ENCODE measurements at regions of chr3 and their contacts with region 1.

Region 1: DNA sequence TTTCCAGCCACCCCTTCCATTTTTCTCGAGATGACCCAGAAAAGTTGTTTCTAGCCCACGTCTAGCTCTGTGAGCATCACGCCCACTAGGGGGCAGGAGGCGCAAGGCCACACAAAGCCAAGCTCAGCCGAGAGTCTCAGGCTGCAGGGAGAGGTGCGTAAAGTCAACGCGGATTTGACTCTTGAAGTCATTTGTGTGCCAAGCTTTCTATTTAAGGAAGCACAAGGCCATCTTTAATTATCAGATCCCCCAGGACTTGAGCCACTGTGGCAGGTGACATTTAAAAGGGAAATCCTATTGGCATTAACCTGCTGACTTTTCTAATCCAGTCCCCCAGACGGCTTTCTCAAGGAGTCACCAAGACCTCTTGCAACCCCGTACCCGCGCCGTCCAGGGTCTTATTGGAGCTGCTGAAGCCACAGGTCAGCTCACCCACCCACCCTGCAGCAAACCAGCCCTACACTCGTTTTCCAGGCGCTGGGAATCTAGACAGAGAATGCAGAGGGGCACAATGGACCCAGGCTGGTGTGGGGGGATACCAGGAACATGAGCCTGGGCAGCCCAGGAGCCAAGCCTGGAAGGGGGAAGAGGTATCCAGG is 62.1 kb downstream of the CAPN7 start:
- DNase-seq: peak; percentile 83
- ATAC-seq: peak; percentile 84
- H3K4me3 ChIP-seq: no peak overlapping the region
- H3K27ac ChIP-seq: no peak overlapping the region
- H3K4me1 ChIP-seq: peaks cover 13% of the 10 kb centered on the region
- H3K27me3 ChIP-seq: no peaks in the 10 kb centered on the region
- CTCF ChIP-seq: peak; percentile 99
- POLR2A ChIP-seq: peak; percentile 70
- RAD21 ChIP-seq: peak; percentile 99

Region 2: DNA sequence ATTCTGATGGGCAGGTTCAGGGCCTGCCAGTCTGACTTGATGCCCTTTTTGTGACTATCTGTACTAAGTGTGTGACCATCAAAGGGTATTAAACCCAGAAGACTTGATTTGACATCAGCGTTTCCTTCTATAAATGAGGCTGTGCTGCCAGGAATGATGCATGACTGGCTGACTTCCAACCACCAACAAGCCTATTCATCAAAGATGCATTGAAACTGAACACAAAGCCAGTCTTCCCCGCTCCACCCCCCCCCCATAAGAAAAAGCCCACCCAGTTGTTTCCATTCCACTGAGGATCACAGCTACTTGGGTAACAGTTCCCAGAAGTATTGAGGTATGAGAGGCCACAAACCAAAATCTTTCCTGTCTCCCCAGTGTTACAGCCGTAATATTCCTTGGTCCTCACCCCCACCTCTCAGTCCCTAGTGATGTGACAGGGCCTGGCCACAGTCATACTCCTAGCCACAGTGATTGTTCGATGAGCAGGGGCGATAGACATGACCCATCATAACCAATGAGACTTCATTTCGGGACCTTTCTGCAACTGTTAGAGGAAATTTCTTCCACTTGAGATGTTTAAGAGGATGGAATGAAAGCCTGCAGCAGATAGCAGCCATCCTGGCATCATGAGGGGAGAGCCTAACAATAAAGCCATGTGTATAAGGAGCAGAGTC is 41.7 kb after region 1 on chr3:
- CTCF ChIA-PET with region 1: no interaction called
- POLR2A ChIA-PET with region 1: no interaction called
- dilution Hi-C with region 1: no loop called
- in situ Hi-C with region 1: no loop called
- intact Hi-C with region 1: no loop called
- DNase-seq: no peak
- ATAC-seq: peak; percentile 33
- H3K4me3 ChIP-seq: no peak overlapping the region
- H3K27ac ChIP-seq: peak overlapping the region; percentile 12; the same call in 1 of the 2 replicates
- H3K4me1 ChIP-seq: peaks cover 10% of the 10 kb centered on the region
- H3K27me3 ChIP-seq: no peaks in the 10 kb centered on the region
- CTCF ChIP-seq: no peak
- POLR2A ChIP-seq: no peak
- RAD21 ChIP-seq: no peak

Region 3: DNA sequence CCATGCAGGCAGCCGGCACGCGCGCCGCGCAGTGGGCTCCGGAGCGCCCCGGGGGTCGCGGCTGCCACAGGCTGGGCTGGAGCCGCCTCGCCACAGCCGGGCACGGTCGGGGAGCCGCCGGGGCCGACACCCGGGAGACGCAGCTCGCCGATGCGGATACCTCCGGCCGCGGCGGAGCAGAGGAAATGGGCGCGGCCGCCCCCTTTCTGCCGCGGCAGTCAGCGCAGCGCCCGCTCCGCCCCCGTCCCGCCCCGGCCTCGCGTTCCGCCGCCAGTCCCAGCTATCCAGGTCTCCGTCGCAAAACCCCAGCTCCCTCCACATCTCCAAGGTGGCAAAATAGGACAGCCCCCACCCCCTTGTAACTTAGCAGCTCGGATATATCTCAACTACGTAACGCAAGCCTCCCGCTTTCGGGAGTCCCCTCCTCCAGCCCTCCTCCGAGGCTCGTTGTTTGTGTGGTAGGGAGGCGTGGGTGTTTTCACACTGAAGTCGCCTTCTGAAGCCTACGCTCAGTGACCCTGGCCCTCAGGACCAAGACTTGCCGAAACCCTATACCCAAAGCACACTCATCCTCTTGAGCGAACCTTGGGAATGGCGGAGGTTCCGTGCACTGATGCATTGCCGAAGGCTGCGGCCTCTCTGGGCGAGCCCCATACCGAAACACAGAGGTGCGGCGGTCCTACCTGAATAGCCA is 64.4 kb after region 1 on chr3 and contains the start of gene SH3BP5:
- CTCF ChIA-PET with region 1: interaction called, 12 read pairs
- POLR2A ChIA-PET with region 1: no interaction called
- dilution Hi-C with region 1: no loop called
- in situ Hi-C with region 1: loop called (anchors 5 kb)
- intact Hi-C with region 1: loop called (anchors 1 kb)
- DNase-seq: peak; percentile 47
- ATAC-seq: peak; percentile 95
- H3K4me3 ChIP-seq: peak within 1 kb of the TSS; percentile 86
- H3K27ac ChIP-seq: peak within 1 kb of the TSS; percentile 38; the same call in 1 of the 2 replicates
- H3K4me1 ChIP-seq: peaks cover 10% of the 10 kb centered on the region
- H3K27me3 ChIP-seq: no peaks in the 10 kb centered on the region
- CTCF ChIP-seq: peak; percentile 69
- POLR2A ChIP-seq: no peak
- RAD21 ChIP-seq: peak; percentile 62
- total RNA-seq, gene SH3BP5: 14.0 and 14.2 TPM in 2 replicates

Region 4: DNA sequence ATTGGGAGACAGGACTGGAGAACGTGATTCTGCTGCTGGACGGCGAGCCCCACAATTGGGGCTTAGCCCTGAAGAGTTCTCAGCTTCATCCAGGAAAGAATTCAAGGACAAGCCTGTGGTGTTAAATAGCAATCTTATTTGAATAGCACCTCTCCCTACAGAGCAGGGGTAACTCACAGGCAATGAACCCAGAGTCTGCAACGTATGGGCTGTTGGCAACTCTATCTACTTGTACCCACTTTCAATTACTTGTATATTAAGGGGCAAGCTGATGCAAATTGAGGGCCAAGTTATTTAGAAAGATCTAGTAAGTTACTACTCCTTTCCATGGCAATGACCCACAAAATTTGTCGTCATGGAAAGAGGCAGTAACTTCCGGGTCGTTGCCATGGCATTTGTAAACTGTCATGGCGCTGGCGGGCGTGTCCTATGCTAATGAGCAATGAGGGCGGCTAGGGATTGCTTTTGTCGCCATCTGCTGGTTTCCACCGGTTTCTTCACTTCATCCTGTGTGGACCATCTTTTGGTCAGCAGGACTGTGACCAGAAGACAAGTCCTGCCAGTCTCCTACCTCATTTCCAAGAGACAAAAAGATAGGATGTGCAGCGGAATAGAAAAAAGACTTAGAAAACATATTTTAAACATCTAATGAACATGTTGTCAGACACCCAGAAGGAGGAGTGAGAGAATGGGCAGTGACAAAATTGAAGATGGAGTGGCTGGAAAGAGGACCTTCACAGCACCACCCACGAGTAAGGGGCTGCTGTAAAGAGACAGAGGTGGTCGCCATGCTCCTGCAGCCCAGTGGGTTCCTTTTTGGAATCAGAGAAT is 110.0 kb after region 1 on chr3:
- CTCF ChIA-PET with region 1: interaction called, 11 read pairs
- POLR2A ChIA-PET with region 1: no interaction called
- dilution Hi-C with region 1: no loop called
- in situ Hi-C with region 1: loop called (anchors 5 kb)
- intact Hi-C with region 1: loop called (anchors 1 kb)
- DNase-seq: peak; percentile 93
- ATAC-seq: peak; percentile 100
- H3K4me3 ChIP-seq: no peak overlapping the region
- H3K27ac ChIP-seq: no peak overlapping the region
- H3K4me1 ChIP-seq: no peaks in the 10 kb centered on the region
- H3K27me3 ChIP-seq: no peaks in the 10 kb centered on the region
- CTCF ChIP-seq: peak; percentile 95
- POLR2A ChIP-seq: 0 out of 2 replicates have a peak, but pooled peaks have one; percentile 30
- RAD21 ChIP-seq: peak; percentile 93

Region 5: GRCh38 chr3:15384510-15385237 is 116.5 kb after region 1 on chr3:
- CTCF ChIA-PET with region 1: interaction called, 4 read pairs
- POLR2A ChIA-PET with region 1: no interaction called
- dilution Hi-C with region 1: no loop called
- in situ Hi-C with region 1: loop called (anchors 5 kb)
- intact Hi-C with region 1: no loop called
- DNase-seq: no peak
- ATAC-seq: no peak
- H3K4me3 ChIP-seq: no peak overlapping the region
- H3K27ac ChIP-seq: no peak overlapping the region
- H3K4me1 ChIP-seq: no peaks in the 10 kb centered on the region
- H3K27me3 ChIP-seq: no peaks in the 10 kb centered on the region
- CTCF ChIP-seq: no peak
- POLR2A ChIP-seq: no peak
- RAD21 ChIP-seq: no peak

Region 6: GRCh38 chr3:15405448-15406050 is 137.4 kb after region 1 on chr3:
- CTCF ChIA-PET with region 1: interaction called, 25 read pairs
- POLR2A ChIA-PET with region 1: no interaction called
- dilution Hi-C with region 1: no loop called
- in situ Hi-C with region 1: no loop called
- intact Hi-C with region 1: loop called (anchors 1 kb)
- DNase-seq: peak; percentile 71
- ATAC-seq: peak; percentile 77
- H3K4me3 ChIP-seq: no peak overlapping the region
- H3K27ac ChIP-seq: no peak overlapping the region
- H3K4me1 ChIP-seq: no peaks in the 10 kb centered on the region
- H3K27me3 ChIP-seq: no peaks in the 10 kb centered on the region
- CTCF ChIP-seq: peak; percentile 65
- POLR2A ChIP-seq: no peak
- RAD21 ChIP-seq: peak; percentile 68

Region 7: DNA sequence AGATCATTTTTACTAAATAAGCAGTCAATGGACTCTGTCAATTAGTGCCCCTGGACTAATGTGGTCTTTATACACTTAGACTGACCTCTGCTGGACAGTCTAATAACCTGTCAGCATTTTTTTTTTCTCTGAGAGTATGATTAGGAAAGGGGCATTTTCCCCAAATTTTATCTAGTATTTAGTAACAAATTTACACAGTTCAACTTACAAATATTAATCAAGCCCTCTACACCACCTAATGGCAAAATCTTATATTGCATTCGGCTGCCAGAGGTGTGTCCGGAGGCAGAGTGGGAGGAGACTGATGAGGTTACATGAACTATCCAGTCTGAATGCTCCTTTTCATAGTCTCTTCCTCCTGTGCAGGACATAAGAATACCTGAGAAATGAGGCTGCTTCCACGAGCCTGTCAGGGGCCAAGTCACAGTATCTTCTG is 289.4 kb after region 1 on chr3:
- CTCF ChIA-PET with region 1: no interaction called
- POLR2A ChIA-PET with region 1: no interaction called
- dilution Hi-C with region 1: no loop called
- in situ Hi-C with region 1: no loop called
- intact Hi-C with region 1: loop called (anchors 1 kb)
- DNase-seq: peak; percentile 75
- ATAC-seq: peak; percentile 99
- H3K4me3 ChIP-seq: no peak overlapping the region
- H3K27ac ChIP-seq: no peak overlapping the region
- H3K4me1 ChIP-seq: no peaks in the 10 kb centered on the region
- H3K27me3 ChIP-seq: no peaks in the 10 kb centered on the region
- CTCF ChIP-seq: peak; percentile 58
- POLR2A ChIP-seq: no peak
- RAD21 ChIP-seq: peak; percentile 52

Region 8: DNA sequence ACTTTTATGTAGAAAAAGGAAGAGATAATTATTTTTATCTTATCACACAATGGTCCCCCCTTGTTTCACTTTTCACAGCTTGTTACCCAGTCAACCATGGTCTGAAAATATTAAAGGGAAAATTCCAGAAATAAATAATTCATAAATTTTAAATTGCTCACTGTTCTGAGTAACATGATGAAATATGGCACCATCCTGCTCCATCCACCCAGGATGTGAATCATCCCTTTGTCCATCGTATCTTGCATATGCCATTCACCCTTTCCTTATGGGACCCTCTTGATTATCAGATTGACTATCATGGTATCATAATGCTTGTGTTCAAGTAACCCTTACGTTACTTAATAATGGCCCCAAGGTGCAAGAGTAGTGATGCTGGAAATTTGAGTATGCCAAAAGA is 485.9 kb after region 1 on chr3:
- CTCF ChIA-PET with region 1: no interaction called
- POLR2A ChIA-PET with region 1: no interaction called
- dilution Hi-C with region 1: no loop called
- in situ Hi-C with region 1: no loop called
- intact Hi-C with region 1: no loop called
- DNase-seq: peak; percentile 44
- ATAC-seq: no peak
- H3K4me3 ChIP-seq: no peak overlapping the region
- H3K27ac ChIP-seq: 0 out of 2 replicates have a peak overlapping the region, but pooled peaks have one; percentile 22
- H3K4me1 ChIP-seq: peaks cover 16% of the 10 kb centered on the region
- H3K27me3 ChIP-seq: no peaks in the 10 kb centered on the region
- CTCF ChIP-seq: no peak
- POLR2A ChIP-seq: no peak
- RAD21 ChIP-seq: no peak

Region 9: DNA sequence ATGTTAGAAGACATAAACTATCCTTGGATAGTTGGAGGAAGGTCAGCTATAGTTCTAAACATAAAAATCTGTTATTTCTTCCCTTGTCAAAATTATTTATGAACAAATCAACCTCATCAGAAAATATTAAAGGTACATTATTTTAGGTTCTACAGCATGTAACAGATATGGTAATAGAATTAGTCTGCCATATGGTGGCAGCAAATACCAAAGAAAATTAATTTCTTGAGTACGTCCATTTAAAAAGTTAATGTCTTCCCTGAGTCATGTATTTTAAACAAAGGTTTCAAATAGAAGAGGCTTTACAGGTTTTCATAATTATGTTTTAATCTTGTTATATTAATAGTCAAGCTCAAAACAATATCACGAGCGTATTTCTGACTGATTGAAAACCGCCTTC is 547.6 kb after region 1 on chr3:
- CTCF ChIA-PET with region 1: no interaction called
- POLR2A ChIA-PET with region 1: no interaction called
- dilution Hi-C with region 1: no loop called
- in situ Hi-C with region 1: no loop called
- intact Hi-C with region 1: no loop called
- DNase-seq: peak; percentile 88
- ATAC-seq: peak; percentile 79
- H3K4me3 ChIP-seq: no peak overlapping the region
- H3K27ac ChIP-seq: peak overlapping the region; percentile 61; the same call in 1 of the 2 replicates
- H3K4me1 ChIP-seq: peaks cover 3% of the 10 kb centered on the region; the same call in 1 of the 2 replicates
- H3K27me3 ChIP-seq: no peaks in the 10 kb centered on the region
- CTCF ChIP-seq: peak; percentile 67
- POLR2A ChIP-seq: no peak
- RAD21 ChIP-seq: peak; percentile 75

Measured in IMR-90 (cell line).